Psoas muscle (tissue), 8 donors: ENCODE measurements at regions of chr15 and their contacts with region 1.

Region 1: DNA sequence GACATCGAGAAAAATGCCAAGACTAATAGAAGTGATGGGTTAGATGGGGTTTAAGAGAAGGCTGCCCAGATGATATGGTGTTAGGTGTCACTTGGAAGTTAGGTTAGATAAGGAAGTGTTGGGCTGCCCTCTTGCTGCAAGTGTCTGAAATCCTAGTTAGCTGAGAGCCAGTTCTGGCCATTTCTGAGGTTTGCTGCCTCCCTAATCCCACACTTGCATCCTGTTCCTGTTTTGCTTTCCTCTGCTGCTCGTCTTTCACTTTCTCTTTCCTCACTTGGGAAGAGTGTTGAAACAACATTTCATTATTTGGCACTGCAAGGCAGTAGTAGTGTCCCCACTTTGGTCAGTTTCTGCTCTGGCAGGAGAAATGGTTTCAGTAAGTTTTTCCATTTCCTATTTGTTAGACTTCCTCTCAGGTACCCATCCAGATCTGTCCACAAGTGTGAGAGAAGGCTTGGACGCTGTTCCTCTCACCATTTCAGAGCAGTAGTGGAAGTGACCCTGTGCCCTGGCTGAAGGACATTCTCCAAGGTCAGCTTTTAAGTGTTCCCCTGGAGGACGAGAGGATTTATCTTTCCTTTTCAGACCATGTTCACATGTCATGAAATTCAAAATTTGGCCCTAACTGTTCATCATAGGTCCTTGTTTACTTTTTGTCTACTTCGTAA is 93.3 kb downstream of the ADAMTSL3 start:
- DNase-seq: no peak
- ATAC-seq: peak in 3 of 4 donors; percentile 63 to 75 (median 69)
- H3K4me3 ChIP-seq: peak overlapping the region; percentile 22
- H3K27ac ChIP-seq: peak overlapping the region; percentile 9
- H3K4me1 ChIP-seq: no peaks in the 10 kb centered on the region
- H3K27me3 ChIP-seq: no peaks in the 10 kb centered on the region
- CTCF ChIP-seq: peak; percentile 23

Region 2: GRCh38 chr15:83571820-83572707 is 175.1 kb before region 1 on chr15:
- intact Hi-C with region 1: loop called in 1 of 2 experiments (anchors 5 kb)
- DNase-seq: no peak
- ATAC-seq: no peak
- H3K4me3 ChIP-seq: no peak overlapping the region
- H3K27ac ChIP-seq: no peak overlapping the region
- H3K4me1 ChIP-seq: no peaks in the 10 kb centered on the region
- H3K27me3 ChIP-seq: peaks cover 0 to 2% (median 0%) of the 10 kb centered on the region in 3 donors
- CTCF ChIP-seq: peak; percentile 34

Region 3: DNA sequence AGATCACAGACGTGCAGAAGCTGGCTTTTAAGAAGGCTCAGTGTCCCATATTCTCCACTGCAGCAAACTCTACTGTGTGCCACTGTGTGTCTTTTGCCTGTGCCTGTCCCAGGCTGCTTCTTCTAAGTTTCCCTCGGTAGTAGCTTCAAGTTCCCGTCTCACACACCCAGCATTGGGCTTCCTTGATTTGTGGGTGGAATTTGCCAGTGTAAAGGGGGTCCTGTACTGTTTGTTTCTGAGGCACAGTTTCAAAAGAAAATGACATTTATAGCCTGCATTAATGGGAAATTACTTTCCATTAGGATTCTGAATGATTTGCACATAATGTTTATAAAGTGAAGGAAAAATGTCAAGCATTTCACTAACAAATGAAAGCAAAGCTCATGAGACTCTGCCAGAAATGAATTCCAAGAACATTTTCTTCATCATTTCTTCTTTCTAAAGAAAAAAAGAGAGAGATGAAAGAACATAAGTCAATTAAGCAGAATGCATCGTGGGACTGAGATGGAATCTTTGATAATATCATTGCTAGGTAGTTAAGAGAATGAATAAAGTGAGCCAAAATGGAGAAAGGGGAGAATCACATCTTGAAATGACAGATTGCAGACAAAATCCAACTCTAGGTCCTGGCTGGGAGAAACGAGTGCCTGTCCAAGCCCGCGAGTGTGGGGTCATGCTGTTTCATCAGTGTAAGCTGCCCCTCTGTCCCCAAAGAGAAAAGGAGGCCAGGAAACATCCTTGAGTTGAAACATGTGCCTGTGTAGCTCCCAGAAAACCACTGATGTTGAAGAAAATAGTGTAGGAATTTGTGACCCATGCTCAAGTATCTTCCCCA is 141.9 kb before region 1 on chr15:
- intact Hi-C with region 1: no loop called
- DNase-seq: peak; percentile 57 to 61
- ATAC-seq: no peak
- H3K4me3 ChIP-seq: no peak overlapping the region
- H3K27ac ChIP-seq: no peak overlapping the region
- H3K4me1 ChIP-seq: no peaks in the 10 kb centered on the region
- H3K27me3 ChIP-seq: no peaks in the 10 kb centered on the region
- CTCF ChIP-seq: no peak

Region 4: DNA sequence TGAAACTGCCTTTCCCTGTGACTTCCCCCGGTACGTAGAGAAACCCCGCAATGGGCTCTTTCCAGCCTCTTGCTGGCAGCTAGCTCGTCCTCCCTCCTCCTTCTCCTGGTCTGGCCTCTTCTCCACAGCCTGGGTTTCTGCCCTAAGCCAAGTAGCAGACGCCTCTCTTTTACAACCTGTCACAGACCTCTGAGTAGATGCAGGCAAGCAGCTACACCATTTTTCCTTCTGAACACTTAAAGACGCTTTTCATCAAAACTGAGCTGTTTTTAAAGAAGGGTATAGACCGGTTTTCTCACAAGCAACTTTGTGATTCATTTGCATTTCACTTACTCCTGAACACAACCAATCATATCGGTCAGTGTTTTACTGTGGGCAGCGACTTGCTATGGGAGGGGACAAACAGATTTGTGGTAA is 61.3 kb before region 1 on chr15:
- intact Hi-C with region 1: no loop called
- DNase-seq: peak in 1 of 2 donors; percentile 22
- ATAC-seq: no peak
- H3K4me3 ChIP-seq: no peak overlapping the region
- H3K27ac ChIP-seq: no peak overlapping the region
- H3K4me1 ChIP-seq: no peaks in the 10 kb centered on the region
- H3K27me3 ChIP-seq: no peaks in the 10 kb centered on the region
- CTCF ChIP-seq: no peak

Region 5: DNA sequence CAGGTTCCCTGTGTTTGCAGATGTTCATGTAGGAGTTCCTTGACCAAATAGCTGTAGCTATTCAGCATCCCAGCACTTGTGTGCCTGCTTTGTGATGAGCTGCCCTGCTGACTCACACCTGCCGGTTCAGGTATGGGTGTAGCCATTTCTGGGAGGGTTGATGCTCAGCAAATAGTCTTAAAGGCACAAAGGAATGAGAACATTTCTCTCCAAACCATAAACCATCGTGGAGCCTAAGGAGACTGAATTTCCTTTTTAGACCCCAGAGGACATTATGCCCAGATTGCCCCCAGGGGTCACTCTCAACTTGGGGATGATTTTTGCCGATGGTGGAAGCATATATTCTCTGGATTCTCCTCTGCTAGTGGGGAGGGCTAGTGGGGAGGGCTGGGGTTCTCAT is 12.7 kb before region 1 on chr15:
- intact Hi-C with region 1: no loop called
- DNase-seq: no peak
- ATAC-seq: no peak
- H3K4me3 ChIP-seq: no peak overlapping the region
- H3K27ac ChIP-seq: no peak overlapping the region
- H3K4me1 ChIP-seq: no peaks in the 10 kb centered on the region
- H3K27me3 ChIP-seq: no peaks in the 10 kb centered on the region
- CTCF ChIP-seq: no peak